ENCODE measurements at regions of chr7 and their contacts with region 1.

Region 1: GRCh38 chr7:42940985-42941847 is 9.0 kb downstream of the MRPL32 start:
- DNase-seq: peak; percentile 93
- H3K4me3 Mint-ChIP-seq: no peak overlapping the region
- H3K27ac Mint-ChIP-seq: no peak overlapping the region
- H3K4me1 Mint-ChIP-seq: peaks cover 30% of the 10 kb centered on the region
- H3K27me3 Mint-ChIP-seq: no peaks in the 10 kb centered on the region

Region 2: GRCh38 chr7:41745451-41745850 is 1195.8 kb before region 1 on chr7:
- intact Hi-C with region 1: no loop called
- DNase-seq: no peak
- H3K4me3 Mint-ChIP-seq: no peak overlapping the region
- H3K27ac Mint-ChIP-seq: no peak overlapping the region
- H3K4me1 Mint-ChIP-seq: no peaks in the 10 kb centered on the region
- H3K27me3 Mint-ChIP-seq: no peaks in the 10 kb centered on the region

Region 3: DNA sequence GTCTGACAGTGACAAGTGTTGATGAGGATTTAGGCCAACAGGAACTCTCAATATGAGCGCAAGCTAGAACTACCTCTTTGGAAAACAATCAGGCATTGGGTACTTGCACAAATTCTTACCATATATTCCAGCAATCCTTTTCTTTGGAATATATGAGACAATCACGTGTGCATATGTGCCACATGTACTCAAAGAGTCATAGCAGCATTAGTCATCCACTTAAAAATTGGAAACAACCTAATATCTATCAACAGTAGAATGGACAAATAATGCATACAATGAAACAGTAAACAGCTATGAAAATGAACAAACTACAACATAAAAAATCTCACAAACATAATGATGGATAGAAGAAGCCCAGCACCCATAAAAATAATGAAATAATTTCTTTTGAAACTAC is 883.9 kb before region 1 on chr7:
- intact Hi-C with region 1: no loop called
- DNase-seq: no peak
- H3K4me3 Mint-ChIP-seq: no peak overlapping the region
- H3K27ac Mint-ChIP-seq: no peak overlapping the region
- H3K4me1 Mint-ChIP-seq: no peaks in the 10 kb centered on the region
- H3K27me3 Mint-ChIP-seq: no peaks in the 10 kb centered on the region

Region 4: DNA sequence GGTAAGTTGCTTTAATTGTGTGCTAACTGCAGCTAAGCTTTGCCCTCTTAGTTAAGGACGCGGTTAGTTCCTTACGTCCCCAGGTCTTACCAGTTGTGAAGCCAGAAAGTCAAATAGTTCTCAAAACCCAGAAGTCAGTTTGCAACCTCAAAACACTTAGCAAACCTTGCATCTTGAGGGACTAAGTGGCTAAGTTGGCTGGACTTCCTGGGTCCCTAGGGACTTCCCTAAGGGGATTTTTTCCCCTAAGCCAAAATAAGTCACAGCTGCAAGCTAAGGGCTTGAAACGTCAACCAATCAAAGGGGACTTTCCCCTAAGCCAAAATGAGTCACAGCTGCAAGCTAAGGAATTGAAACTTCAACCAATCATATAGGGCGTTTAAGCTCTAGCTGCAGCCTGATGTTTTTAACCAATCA is 135.0 kb after region 1 on chr7:
- intact Hi-C with region 1: loop called (anchors 5 kb)
- DNase-seq: peak; percentile 65
- H3K4me3 Mint-ChIP-seq: no peak overlapping the region
- H3K27ac Mint-ChIP-seq: no peak overlapping the region
- H3K4me1 Mint-ChIP-seq: peaks cover 9% of the 10 kb centered on the region
- H3K27me3 Mint-ChIP-seq: peaks cover 9% of the 10 kb centered on the region

Region 5: DNA sequence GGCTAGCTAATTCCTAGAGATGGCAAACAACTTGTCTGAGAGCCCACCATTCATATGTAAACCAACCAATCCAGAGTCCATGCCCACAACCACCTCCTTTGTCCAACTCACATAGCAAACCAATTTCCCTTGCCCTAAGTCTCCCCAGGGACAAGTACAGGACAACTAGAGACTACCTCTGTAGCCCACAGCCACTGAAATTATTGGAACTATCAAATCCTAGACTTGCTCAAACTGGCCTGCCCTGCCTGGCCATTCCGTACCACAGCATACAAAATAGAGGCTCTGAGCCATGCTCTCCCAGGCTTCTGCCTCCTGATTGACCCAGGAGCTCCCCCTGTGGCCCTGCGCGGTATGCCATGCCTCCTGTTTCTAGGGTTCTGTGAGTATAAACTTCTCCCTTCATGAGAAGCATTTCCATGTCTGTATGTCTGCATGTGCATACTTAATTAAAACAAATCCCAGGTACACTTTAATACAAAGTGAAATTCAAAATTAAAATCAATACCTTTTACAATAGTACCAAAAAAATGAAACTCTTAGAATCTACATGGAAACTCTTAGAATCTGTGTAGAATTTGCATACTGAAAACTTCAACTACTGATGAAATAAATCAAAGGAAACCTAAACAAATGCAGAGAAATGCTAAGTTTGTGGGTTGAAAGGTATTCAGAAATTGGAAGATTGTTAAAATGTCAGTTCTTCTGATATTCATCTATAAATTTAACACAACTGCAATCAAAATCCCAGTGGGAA is 167.2 kb after region 1 on chr7:
- intact Hi-C with region 1: loop called (anchors 2 kb)
- DNase-seq: peak; percentile 87
- H3K4me3 Mint-ChIP-seq: no peak overlapping the region
- H3K27ac Mint-ChIP-seq: no peak overlapping the region
- H3K4me1 Mint-ChIP-seq: peaks cover 4% of the 10 kb centered on the region
- H3K27me3 Mint-ChIP-seq: peaks cover 53% of the 10 kb centered on the region

Region 6: DNA sequence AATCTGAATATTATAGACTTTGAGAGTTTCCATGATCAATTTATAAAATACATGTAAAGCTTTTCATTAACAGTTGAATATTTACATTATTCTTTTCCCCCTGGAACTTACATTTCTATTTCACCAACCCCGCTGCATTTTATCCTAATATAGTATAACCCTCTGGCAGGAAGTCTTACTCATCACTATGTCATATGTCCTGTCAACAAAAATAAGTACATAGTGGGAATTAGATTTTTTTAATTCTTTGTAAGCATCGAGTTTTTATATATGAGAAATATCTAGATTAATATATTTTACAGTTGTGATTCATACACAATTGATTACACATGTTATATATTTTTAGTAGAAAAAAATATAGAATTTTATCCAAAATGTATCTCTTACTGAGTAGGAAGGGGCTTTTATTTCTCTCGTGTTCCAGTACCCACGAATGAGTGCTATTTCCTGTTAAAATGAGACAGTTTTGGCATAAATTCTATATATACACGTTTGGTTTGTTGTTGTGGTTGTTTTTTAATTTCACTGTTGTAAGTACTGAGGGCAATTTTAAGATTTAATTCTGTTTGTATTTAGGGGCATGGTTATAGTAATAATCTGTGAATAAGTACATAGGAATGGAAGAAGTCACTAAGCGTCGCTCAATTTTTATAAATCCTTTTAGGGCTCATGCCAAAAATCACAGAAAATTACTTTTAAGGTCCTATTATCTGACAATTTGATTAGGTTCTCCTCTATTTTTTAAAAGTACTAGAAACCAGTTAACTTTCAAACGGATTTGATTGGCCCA is 258.4 kb after region 1 on chr7:
- intact Hi-C with region 1: no loop called
- DNase-seq: no peak
- H3K4me3 Mint-ChIP-seq: no peak overlapping the region
- H3K27ac Mint-ChIP-seq: no peak overlapping the region
- H3K4me1 Mint-ChIP-seq: no peaks in the 10 kb centered on the region
- H3K27me3 Mint-ChIP-seq: no peaks in the 10 kb centered on the region

Region 7: GRCh38 chr7:43260980-43261878 is 320.0 kb after region 1 on chr7:
- intact Hi-C with region 1: loop called (anchors 1 kb)
- DNase-seq: peak; percentile 89
- H3K4me3 Mint-ChIP-seq: no peak overlapping the region
- H3K27ac Mint-ChIP-seq: no peak overlapping the region
- H3K4me1 Mint-ChIP-seq: peaks cover 2% of the 10 kb centered on the region
- H3K27me3 Mint-ChIP-seq: peaks cover 9% of the 10 kb centered on the region

Region 8: GRCh38 chr7:43439631-43440401 is 498.6 kb after region 1 on chr7:
- intact Hi-C with region 1: loop called (anchors 1 kb)
- DNase-seq: peak; percentile 84
- H3K4me3 Mint-ChIP-seq: no peak overlapping the region
- H3K27ac Mint-ChIP-seq: no peak overlapping the region
- H3K4me1 Mint-ChIP-seq: no peaks in the 10 kb centered on the region
- H3K27me3 Mint-ChIP-seq: peaks cover 2% of the 10 kb centered on the region

Region 9: DNA sequence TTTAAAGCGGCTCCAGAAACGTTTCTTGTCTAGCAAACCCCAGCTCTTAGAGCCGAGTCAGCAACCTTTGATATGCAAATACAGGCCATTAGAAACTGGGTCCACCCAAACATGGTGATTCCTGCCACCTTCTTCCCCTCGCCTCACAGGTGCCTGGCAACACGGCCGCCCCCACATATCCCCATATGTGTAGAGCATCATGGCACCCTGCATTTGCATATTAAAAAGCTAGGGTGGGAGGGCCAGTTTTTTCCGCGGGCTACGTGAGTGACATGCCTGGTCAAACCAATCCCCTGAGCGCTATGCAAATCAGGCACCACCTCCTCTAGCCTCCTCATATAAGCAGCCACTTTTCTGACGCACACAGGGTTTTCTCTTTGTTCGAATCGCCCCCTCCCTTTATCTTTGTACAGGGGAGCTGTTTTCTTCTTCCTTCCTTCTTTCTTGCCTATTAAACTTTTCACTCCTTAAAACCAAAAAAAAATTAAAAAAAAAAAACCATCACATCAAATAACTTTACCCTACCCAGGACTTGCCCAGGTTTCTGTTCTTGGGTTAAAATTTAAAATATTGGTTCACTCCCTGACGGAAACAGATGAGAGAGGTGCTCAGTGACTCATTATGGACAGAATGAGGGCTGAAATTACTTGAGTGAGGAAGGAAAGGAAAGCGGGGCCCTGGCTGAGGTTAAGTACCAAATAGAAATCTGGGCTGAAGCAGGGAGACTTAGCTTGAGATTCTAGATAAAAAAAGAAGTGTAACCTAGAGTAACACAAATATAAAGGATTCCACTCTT is 728.3 kb after region 1 on chr7:
- intact Hi-C with region 1: no loop called
- DNase-seq: peak; percentile 77
- H3K4me3 Mint-ChIP-seq: peak overlapping the region; percentile 54
- H3K27ac Mint-ChIP-seq: peak overlapping the region; percentile 85
- H3K4me1 Mint-ChIP-seq: peaks cover 53% of the 10 kb centered on the region
- H3K27me3 Mint-ChIP-seq: no peaks in the 10 kb centered on the region

Region 10: GRCh38 chr7:43729214-43729923 is 788.2 kb after region 1 on chr7 and contains the start of gene COA1:
- intact Hi-C with region 1: loop called (anchors 5 kb)
- DNase-seq: peak; percentile 95
- H3K4me3 Mint-ChIP-seq: peak within 1 kb of the TSS; percentile 94
- H3K27ac Mint-ChIP-seq: peak within 1 kb of the TSS; percentile 89
- H3K4me1 Mint-ChIP-seq: peaks cover 26% of the 10 kb centered on the region
- H3K27me3 Mint-ChIP-seq: peaks cover 3% of the 10 kb centered on the region
- total RNA-seq, gene COA1: 79.0 and 79.3 TPM in 2 replicates

Measured in activated CD4-positive, alpha-beta T cell treated with anti-CD3 and anti-CD28 coated beads, Interleukin-2, amount 10 ng/mL, durations not matched to agents 24 days and 14 days (primary cell).